ENCODE measurements at regions of chr5 and their contacts with region 1.

Region 1: GRCh38 chr5:173123416-173123815 is 20.9 kb upstream of the BNIP1 start:
- DNase-seq: no peak
- ATAC-seq: no peak
- H3K4me3 ChIP-seq: no peak overlapping the region
- H3K27ac ChIP-seq: no peak overlapping the region
- H3K4me1 ChIP-seq: no peaks in the 10 kb centered on the region
- H3K27me3 ChIP-seq: no peaks in the 10 kb centered on the region
- CTCF ChIP-seq: no peak

Region 2: GRCh38 chr5:173144200-173145176 is 21.1 kb after region 1 on chr5 and contains the start of gene BNIP1:
- CTCF ChIA-PET with region 1: no interaction called
- POLR2A ChIA-PET with region 1: interaction called, 23 read pairs
- intact Hi-C with region 1: no loop called
- DNase-seq: peak; percentile 97
- ATAC-seq: peak; percentile 97
- H3K4me3 ChIP-seq: peak within 1 kb of the TSS; percentile 88
- H3K27ac ChIP-seq: peak within 1 kb of the TSS; percentile 82
- H3K4me1 ChIP-seq: no peaks in the 10 kb centered on the region; the same call in 1 of the 2 replicates
- H3K27me3 ChIP-seq: no peaks in the 10 kb centered on the region
- CTCF ChIP-seq: peak; percentile 79
- total RNA-seq, gene BNIP1: 17.0 and 21.5 TPM in 2 replicates

Region 3: DNA sequence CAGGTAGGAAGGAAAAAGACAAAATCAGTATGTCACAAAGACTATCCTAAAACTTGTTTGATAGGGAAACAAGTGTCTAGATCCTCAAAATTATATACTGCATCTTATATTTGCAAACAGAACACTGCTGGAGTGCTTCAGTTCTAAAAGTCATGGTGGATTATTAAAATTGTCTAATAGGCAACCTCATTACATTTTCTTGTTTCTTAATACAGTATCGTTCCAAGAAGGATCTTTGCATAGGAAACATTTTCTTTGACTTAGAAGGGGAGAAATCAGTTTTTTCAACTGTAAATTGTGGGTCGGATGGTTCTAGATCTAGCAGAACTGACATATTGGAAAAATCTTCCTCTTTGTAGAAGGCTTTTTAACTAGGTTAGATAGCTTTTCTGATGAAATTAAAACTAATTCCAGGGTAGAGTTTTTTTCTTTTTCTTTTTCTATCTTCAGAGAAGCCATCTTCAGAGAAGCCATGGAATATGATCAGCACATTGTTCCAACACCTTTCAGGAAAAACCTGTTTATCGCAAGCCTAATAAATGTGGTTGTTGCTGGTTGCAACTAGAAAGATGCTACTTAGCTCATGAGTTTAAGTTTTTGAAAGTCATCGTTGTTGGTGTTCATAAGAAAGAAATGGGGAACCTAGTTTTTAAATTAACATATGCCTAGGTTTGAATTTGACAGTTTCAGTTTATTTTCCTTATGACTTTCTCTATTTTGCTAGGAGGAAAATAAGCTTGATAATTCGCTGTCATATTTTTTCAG is 772.2 kb after region 1 on chr5:
- CTCF ChIA-PET with region 1: no interaction called
- POLR2A ChIA-PET with region 1: interaction called, 16 read pairs
- intact Hi-C with region 1: no loop called
- DNase-seq: peak; percentile 75
- ATAC-seq: no peak
- H3K4me3 ChIP-seq: peak overlapping the region; percentile 4; the same call in 1 of the 2 replicates
- H3K27ac ChIP-seq: no peak overlapping the region
- H3K4me1 ChIP-seq: peaks cover 43% of the 10 kb centered on the region
- H3K27me3 ChIP-seq: no peaks in the 10 kb centered on the region
- CTCF ChIP-seq: no peak

Measured in PC-3 (cell line).